ENCODE measurements at regions of chr18 and their contacts with region 1.

Region 1: DNA sequence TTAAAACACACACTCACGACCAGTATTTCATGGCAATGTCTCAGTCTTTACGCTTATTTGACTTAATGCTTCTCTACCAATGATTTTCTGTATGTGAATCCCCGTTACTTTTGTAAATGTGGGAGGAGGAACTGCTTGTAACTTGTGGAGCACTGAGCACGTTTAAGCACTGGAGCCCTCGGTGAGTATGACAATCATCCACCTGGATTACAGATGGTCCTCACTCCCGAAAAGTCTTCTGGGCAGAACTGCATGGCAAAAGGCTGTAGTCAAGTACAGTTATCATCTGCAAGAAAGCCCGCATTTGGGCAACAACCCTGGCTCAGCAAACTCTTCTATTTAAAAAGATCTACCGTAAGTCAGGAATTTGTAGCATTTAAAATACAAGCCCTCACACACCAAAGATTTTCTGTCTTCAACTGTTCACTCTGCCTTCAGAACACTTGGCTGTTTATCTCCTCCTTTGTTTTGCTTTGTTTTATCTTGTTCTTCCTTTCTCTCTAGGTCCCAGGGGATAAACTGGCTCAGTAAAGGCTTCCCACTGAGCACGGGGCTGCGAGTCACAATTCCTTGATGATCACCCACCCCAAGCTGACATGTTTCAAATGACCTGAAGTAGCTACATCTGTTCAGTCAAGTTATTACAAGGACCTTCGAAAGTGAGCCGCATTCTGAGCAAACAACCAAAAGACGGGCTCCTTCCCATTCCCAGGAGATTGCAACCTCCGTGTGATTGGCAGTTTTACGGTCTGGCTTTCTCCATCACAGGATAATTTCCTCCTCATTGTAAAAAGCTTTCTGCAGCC is 102.2 kb downstream of the DLGAP1 start:
- DNase-seq: no peak
- ATAC-seq: no peak
- H3K4me3 Mint-ChIP-seq: no peak overlapping the region
- H3K27ac Mint-ChIP-seq: no peak overlapping the region
- H3K4me1 Mint-ChIP-seq: no peaks in the 10 kb centered on the region
- H3K27me3 Mint-ChIP-seq: peaks cover 2% of the 10 kb centered on the region

Region 2: GRCh38 chr18:4335386-4335785 is 17.6 kb before region 1 on chr18:
- CTCF ChIA-PET with region 1: no interaction called
- POLR2A ChIA-PET with region 1: no interaction called
- intact Hi-C with region 1: no loop called
- DNase-seq: no peak
- ATAC-seq: no peak
- H3K4me3 Mint-ChIP-seq: no peak overlapping the region
- H3K27ac Mint-ChIP-seq: no peak overlapping the region
- H3K4me1 Mint-ChIP-seq: no peaks in the 10 kb centered on the region
- H3K27me3 Mint-ChIP-seq: no peaks in the 10 kb centered on the region

Region 3: DNA sequence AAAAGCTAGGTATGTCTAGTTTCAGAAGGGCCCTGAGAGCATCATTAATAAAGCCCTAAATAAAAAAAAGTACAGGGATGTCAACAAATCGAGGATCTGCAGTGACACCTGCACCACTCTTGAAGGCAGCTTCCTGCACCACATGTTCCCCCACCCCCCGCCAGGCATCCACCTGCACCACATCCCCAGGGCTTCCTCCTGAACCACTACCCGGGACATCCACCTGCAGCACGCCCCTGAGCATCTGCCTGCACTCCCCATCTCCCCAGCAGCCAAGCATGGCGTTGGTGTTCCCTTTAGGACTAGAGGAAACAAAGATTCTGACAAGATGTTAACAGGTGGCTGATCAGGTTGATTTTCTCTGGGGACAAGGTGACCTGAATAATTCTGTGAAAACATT is 47.0 kb after region 1 on chr18:
- CTCF ChIA-PET with region 1: no interaction called
- POLR2A ChIA-PET with region 1: no interaction called
- intact Hi-C with region 1: loop called in 1 of 2 experiments (anchors 5 kb)
- DNase-seq: no peak
- ATAC-seq: no peak
- H3K4me3 Mint-ChIP-seq: no peak overlapping the region
- H3K27ac Mint-ChIP-seq: no peak overlapping the region
- H3K4me1 Mint-ChIP-seq: no peaks in the 10 kb centered on the region
- H3K27me3 Mint-ChIP-seq: no peaks in the 10 kb centered on the region

Measured in activated CD4-positive, alpha-beta T cell treated with anti-CD3 and anti-CD28 coated beads for 36 hours (primary cell).